K562 (cell line): ENCODE measurements at regions of chr1 and their contacts with region 1.

Region 1: DNA sequence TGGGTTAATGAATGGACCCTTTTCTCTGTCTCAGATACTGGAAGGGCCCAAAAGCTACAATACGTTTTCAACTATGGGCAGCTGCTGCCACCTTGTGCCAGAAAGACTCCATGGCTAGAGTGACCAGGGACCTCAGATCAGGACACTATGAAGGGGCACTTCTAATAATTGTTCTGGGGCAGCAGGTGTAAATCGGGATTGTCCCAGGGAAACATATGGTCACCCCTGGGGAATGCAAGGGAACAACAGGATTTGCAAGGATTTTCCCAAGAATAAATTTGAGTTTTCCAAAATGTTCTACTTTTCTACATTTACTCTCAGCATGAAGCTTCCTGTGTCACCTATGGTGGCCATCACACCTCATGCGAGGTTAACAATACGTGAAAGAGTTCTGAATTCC is 12.0 kb upstream of the FCAMR start:
- DNase-seq: peak; percentile 68 to 78 (median 74)
- ATAC-seq: peak; percentile 93
- H3K4me3 ChIP-seq: no peak overlapping the region
- H3K27ac ChIP-seq: no peak overlapping the region
- H3K4me1 ChIP-seq: peaks cover 0 to 23% of the 10 kb centered on the region in 2 experiments; a peak in 3 of 5 replicates
- H3K27me3 ChIP-seq: no peaks in the 10 kb centered on the region
- CTCF ChIP-seq: peak; percentile 87 to 90 (median 88)
- EP300 ChIP-seq: no peak
- POLR2A ChIP-seq: no peak
- RAD21 ChIP-seq: peak; percentile 92 to 94

Region 2: GRCh38 chr1:205750138-205751035 is 1231.8 kb before region 1 on chr1 and contains the start of gene NUCKS1:
- CTCF ChIA-PET with region 1: no interaction called
- POLR2A ChIA-PET with region 1: no interaction called
- in situ Hi-C with region 1: no loop called
- intact Hi-C with region 1: no loop called
- DNase-seq: peak; percentile 84 to 100 (median 90)
- ATAC-seq: peak; percentile 84
- H3K4me3 ChIP-seq: peak within 1 kb of the TSS; percentile 71
- H3K27ac ChIP-seq: peak within 1 kb of the TSS; percentile 96
- H3K4me1 ChIP-seq: peaks cover 8 to 33% of the 10 kb centered on the region in 2 experiments; a peak in 4 of 5 replicates
- H3K27me3 ChIP-seq: no peaks in the 10 kb centered on the region
- CTCF ChIP-seq: peak in 1 of 3 experiments; percentile 11; a peak in 2 of 6 replicates
- EP300 ChIP-seq: peak; percentile 99
- POLR2A ChIP-seq: peak; percentile 85
- RAD21 ChIP-seq: no peak
- polyA plus RNA-seq, gene NUCKS1: 66.7 to 83.4 TPM

Region 3: DNA sequence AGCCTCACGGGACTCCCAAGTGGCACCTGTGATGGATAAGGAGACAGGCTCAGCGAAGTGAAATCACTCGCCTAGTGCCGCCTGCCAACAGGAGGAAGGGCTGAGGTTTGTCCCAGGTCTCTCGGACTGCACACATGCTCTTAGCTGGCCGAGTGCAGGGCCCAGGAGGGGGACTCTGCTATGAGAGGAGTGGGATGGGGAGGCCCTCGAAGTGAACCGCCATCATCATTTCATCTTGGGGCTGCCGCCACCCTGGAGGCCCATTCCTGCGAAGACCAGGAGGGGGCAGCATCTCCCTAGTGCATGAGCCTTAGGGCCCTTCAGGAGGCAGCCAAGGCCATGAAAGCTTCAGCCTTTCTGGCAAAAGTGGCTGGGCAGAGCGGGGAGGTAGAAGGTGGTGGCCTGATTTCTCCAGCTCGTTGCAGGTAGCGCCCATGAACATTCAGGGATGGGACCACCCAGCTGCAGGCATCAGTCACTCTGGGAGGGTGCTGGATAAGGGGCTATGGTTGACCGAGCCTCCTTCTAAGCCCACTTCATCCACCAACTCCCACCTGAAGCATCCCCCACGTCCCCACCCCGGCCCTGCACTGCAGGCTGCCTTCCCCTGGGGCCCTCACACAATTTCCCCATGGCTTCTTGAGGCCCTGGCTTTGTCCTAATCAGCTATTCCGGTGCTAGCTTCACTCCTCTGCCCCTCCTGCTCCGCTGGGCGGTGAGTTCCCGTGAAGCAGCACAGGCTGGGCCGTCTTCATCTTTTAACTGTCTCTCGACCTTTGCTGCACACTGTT is 492.0 kb before region 1 on chr1:
- CTCF ChIA-PET with region 1: no interaction called
- POLR2A ChIA-PET with region 1: no interaction called
- in situ Hi-C with region 1: no loop called
- intact Hi-C with region 1: loop called (anchors 10 kb)
- DNase-seq: peak; percentile 90 to 94 (median 92)
- ATAC-seq: peak; percentile 96
- H3K4me3 ChIP-seq: no peak overlapping the region
- H3K27ac ChIP-seq: no peak overlapping the region
- H3K4me1 ChIP-seq: peaks cover 19 to 31% of the 10 kb centered on the region in 2 experiments
- H3K27me3 ChIP-seq: no peaks in the 10 kb centered on the region
- CTCF ChIP-seq: peak; percentile 99
- EP300 ChIP-seq: no peak
- POLR2A ChIP-seq: no peak
- RAD21 ChIP-seq: peak; percentile 98 to 99

Region 4: GRCh38 chr1:206635080-206635977 is 346.9 kb before region 1 on chr1 and contains the start of gene DYRK3:
- CTCF ChIA-PET with region 1: interaction called, 3 read pairs
- POLR2A ChIA-PET with region 1: no interaction called
- in situ Hi-C with region 1: no loop called
- intact Hi-C with region 1: loop called (anchors 5 kb)
- DNase-seq: peak; percentile 98 to 99 (median 99)
- ATAC-seq: peak; percentile 93
- H3K4me3 ChIP-seq: peak within 1 kb of the TSS; percentile 87
- H3K27ac ChIP-seq: peak within 1 kb of the TSS; percentile 77
- H3K4me1 ChIP-seq: peaks cover 14 to 24% of the 10 kb centered on the region in 2 experiments
- H3K27me3 ChIP-seq: no peaks in the 10 kb centered on the region
- CTCF ChIP-seq: peak in 2 of 3 experiments; percentile 30; a peak in 2 of 6 replicates
- EP300 ChIP-seq: no peak; the same call in 1 of the 2 replicates
- POLR2A ChIP-seq: peak; percentile 90
- RAD21 ChIP-seq: no peak; a peak in 1 of 4 replicates
- polyA plus RNA-seq, gene DYRK3: 4.5 to 5.2 TPM

Region 5: DNA sequence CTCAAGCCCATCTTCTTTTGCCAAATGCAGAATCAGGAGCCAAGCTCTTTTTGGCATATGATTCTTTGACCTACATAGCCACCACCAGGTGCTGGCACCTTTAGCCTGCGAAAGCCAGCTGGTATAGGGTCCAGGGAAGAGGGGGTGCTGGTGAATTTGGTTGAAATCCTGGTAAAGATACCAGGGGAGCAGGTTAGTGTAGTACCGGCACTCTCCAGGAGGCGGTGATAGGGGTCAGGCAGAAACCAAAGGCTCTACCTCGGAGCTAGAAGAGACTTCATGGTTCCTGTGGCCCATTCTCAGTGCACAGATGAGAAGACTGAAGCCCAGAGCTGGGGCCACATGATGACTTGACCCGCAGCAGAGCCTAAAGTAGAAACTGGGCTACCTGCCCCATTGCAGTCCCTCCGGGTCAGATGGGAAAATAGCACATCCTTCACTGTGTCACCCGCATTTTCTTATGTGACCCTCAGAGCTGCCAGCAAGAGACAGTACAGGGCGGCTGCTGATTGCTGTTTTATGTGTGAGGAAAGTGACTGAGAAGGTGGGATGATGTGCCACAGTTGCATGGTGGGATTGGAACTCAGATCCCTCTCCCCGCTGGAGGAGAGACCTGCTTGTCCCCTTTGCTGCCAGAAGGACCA is 247.6 kb before region 1 on chr1:
- CTCF ChIA-PET with region 1: interaction called, 5 read pairs
- POLR2A ChIA-PET with region 1: no interaction called
- in situ Hi-C with region 1: loop called (anchors 5 kb)
- intact Hi-C with region 1: loop called (anchors 5 kb)
- DNase-seq: peak; percentile 72 to 79 (median 76)
- ATAC-seq: peak; percentile 84
- H3K4me3 ChIP-seq: no peak overlapping the region
- H3K27ac ChIP-seq: no peak overlapping the region
- H3K4me1 ChIP-seq: peaks cover 10 to 17% of the 10 kb centered on the region in 2 experiments
- H3K27me3 ChIP-seq: no peaks in the 10 kb centered on the region; a peak in 1 of 5 replicates
- CTCF ChIP-seq: peak; percentile 89 to 96 (median 89)
- EP300 ChIP-seq: no peak
- POLR2A ChIP-seq: no peak
- RAD21 ChIP-seq: peak; percentile 88 to 89

Region 6: GRCh38 chr1:206865013-206865671 is 117.1 kb before region 1 on chr1 and contains the start of gene IL20:
- CTCF ChIA-PET with region 1: interaction called, 5 read pairs
- POLR2A ChIA-PET with region 1: no interaction called
- in situ Hi-C with region 1: no loop called
- intact Hi-C with region 1: loop called (anchors 1 kb)
- DNase-seq: peak; percentile 82 to 91 (median 88)
- ATAC-seq: peak; percentile 99
- H3K4me3 ChIP-seq: no peak within 1 kb of the TSS
- H3K27ac ChIP-seq: no peak within 1 kb of the TSS
- H3K4me1 ChIP-seq: peaks cover 0 to 5% of the 10 kb centered on the region in 2 experiments; a peak in 2 of 5 replicates
- H3K27me3 ChIP-seq: peaks cover 8 to 16% of the 10 kb centered on the region in 2 experiments; a peak in 4 of 5 replicates
- CTCF ChIP-seq: peak; percentile 93 to 99 (median 97)
- EP300 ChIP-seq: no peak
- POLR2A ChIP-seq: no peak
- RAD21 ChIP-seq: peak; percentile 71 to 76
- polyA plus RNA-seq, gene IL20: not detected

Region 7: DNA sequence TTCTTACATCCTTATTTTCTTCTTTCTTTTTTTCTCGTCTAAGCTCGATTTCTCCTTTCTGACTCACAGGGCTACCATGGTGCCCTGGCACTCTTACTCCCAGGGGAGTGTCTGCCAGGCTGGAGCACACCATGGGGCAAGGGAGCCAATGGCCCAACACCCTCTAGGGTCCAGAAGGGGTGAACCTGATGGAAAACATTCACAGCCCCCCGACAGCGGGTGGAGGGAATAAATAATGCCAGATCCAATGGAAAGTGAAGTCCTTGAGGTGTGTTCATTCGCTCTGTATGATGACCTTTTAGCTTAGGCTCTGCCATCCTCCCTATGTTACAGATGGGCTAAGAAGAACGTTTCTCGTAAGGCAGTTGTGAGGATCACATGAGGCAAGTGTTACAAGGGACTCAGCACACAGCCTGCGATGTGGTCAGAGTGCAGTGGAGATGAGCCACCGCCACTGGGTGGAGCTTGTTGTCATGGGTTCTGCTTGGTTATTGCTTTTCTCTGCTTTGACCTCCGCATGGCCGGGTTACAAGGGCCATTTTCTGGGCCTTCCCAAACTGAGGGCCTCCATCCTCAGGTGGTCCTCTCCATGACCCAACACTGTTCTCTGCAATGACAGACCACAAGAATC is 57.0 kb before region 1 on chr1:
- CTCF ChIA-PET with region 1: interaction called, 3 read pairs
- POLR2A ChIA-PET with region 1: no interaction called
- in situ Hi-C with region 1: no loop called
- intact Hi-C with region 1: loop called (anchors 1 kb)
- DNase-seq: peak; percentile 49 to 81 (median 60)
- ATAC-seq: peak; percentile 92
- H3K4me3 ChIP-seq: no peak overlapping the region
- H3K27ac ChIP-seq: peak overlapping the region; percentile 13; the same call in 2 of the 3 replicates
- H3K4me1 ChIP-seq: peaks cover 7 to 29% of the 10 kb centered on the region in 2 experiments
- H3K27me3 ChIP-seq: no peaks in the 10 kb centered on the region; a peak in 1 of 5 replicates
- CTCF ChIP-seq: peak; percentile 39 to 61 (median 59); a peak in 5 of 6 replicates
- EP300 ChIP-seq: no peak
- POLR2A ChIP-seq: no peak
- RAD21 ChIP-seq: peak; percentile 44 to 64; a peak in 3 of 4 replicates

Region 8: DNA sequence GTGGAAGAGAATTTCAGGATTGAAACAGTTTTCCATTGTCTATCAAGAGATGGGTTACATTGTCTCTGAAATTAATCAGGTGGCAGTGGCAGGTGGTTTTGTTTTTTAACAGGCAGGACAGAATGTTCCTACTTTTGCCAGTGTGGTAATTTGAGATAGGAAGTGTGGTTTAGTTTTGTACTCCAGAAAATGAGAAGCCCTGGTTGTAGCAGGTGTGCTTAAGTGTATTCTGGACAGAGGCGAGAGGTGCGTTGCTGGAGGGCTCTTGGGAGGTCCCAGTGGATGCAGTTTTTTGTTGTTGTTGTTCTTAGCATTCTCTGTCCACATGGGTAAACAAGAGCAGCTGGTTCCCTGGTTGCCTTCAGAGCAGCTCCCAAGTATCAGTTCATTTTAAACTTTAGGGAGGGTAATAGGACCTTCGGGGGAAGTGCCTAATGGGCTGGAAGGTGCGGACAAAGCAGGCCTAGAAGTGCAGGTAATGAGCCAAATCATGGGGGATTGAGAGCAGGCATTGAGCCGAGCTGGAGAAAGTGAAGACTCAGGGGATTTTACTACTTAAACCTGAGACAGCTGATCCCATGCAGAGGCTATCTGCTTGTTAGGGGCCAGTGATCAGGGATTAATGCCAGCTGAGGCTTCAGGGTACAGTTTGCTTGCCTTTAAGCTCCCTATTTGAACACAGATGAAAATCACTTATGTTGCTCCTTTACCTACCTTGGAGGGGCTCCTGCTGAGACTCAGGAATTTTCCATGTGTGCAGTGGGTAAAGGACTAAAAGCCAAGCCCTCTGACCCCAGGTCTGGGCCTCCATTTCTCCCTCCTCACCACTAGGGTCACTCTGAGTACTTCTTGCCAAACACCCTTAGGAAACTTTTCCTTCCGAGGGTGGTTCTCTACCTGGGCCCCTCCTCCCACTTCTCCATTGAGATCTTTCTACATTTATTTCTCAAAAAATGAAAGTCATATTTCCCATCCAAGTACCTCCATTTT is 77.0 kb after region 1 on chr1:
- CTCF ChIA-PET with region 1: no interaction called
- POLR2A ChIA-PET with region 1: no interaction called
- in situ Hi-C with region 1: no loop called
- intact Hi-C with region 1: no loop called
- DNase-seq: peak in 3 of 4 experiments; percentile 43 to 51 (median 43)
- ATAC-seq: peak; percentile 82
- H3K4me3 ChIP-seq: no peak overlapping the region
- H3K27ac ChIP-seq: no peak overlapping the region
- H3K4me1 ChIP-seq: peaks cover under 1 to 17% of the 10 kb centered on the region in 2 experiments; a peak in 4 of 5 replicates
- H3K27me3 ChIP-seq: no peaks in the 10 kb centered on the region
- CTCF ChIP-seq: peak; percentile 20 to 49 (median 31); a peak in 5 of 6 replicates
- EP300 ChIP-seq: no peak
- POLR2A ChIP-seq: no peak
- RAD21 ChIP-seq: no peak

Region 9: DNA sequence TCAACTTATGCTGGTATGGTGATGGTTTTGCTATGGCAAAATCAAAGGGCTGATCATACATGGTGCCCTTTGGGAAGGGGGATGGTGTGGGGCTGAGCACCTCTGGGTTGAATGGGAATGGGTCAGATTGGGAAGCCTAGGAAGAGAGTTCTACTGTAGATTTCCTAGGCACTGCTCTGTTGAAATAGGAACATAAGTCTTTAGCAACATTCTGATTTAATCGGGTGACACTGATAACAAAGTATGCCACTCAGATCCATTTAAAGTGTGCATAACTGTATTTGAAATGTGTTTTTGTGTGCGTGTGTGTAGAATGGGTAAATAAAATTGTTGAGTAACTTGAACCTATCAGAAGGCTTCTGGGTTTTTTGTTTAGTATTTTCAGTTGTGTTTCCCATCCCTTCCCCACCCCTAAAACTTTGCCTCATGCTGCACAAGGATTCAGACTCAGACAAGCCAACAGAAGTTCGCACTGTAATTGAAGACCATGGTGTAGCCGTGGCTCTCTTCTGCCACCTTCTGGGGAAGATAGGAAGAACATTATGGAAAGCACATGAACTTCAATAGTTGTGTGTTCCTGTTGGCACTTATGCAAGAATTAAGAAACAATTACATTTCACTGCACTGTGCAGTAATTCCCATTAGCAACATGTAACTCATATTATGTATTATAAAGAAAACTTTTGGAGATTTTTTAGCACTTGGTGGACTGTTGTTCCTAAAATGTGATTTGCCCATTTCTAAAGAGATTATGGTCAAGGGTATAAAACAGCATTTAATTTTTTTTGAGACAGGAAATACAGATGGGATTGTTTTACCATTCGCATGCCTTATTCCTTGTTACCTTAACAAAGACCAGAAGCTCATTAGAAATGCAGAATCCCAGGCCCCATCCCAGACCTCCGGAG is 95.5 kb after region 1 on chr1:
- CTCF ChIA-PET with region 1: interaction called, 9 read pairs
- POLR2A ChIA-PET with region 1: no interaction called
- in situ Hi-C with region 1: no loop called
- intact Hi-C with region 1: loop called (anchors 1 kb)
- DNase-seq: peak; percentile 79 to 91 (median 82)
- ATAC-seq: peak; percentile 96
- H3K4me3 ChIP-seq: no peak overlapping the region
- H3K27ac ChIP-seq: no peak overlapping the region
- H3K4me1 ChIP-seq: peaks cover 0 to 10% of the 10 kb centered on the region in 2 experiments; a peak in 2 of 5 replicates
- H3K27me3 ChIP-seq: no peaks in the 10 kb centered on the region
- CTCF ChIP-seq: peak; percentile 92 to 98 (median 95)
- EP300 ChIP-seq: no peak
- POLR2A ChIP-seq: no peak
- RAD21 ChIP-seq: peak; percentile 97 to 98